ENCODE measurements at regions of chr15 and their contacts with region 1.

Region 1: DNA sequence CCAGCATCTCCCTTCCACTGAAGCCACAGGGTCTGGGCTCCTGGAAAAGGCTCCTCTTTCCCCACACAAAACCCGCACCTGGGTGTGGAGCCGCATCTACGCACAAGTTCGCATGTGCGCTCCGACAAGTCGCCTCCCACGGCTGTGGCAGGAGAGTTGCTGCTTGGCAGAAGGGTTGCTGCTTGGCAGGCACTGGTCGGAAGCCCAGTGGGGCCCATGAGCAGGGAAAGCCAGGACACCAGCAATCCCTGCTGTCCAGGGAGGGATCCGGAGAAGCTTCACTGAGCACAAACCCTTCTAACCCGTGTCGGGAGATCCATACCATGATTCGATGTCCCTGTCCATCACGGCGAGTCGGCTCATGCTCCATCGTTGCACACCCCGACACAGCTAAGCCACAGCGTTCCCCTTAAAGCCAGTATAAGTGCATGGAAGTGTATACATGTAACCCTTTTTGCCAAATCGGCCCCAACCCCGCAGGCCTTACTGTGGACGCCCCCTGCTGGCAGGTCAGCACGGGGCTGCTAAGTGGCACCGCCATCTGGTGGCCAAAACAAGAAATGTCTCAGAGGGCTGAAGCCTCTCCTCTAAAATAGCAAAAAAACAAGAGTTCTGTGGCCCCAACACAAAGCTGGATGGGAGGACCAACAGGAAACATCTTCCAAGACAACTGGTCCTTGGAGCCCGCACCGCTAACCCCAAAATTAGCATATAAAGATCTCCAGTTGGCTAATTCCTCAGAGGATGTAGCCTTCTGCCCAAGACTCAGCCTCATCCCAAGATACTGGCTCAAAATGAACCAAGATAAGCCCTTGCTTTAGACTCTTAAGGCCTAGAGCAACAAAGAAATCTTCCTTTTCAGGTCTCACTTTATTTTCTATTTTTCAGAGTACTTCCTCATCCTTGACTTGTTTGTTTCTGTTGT is 8.3 kb downstream of the ANKRD63 start:
- DNase-seq: peak; percentile 78 to 81
- ATAC-seq: peak; percentile 18 to 69 (median 50)
- H3K4me3 ChIP-seq: no peak overlapping the region
- H3K27ac ChIP-seq: no peak overlapping the region
- H3K4me1 ChIP-seq: peaks cover 0 to 32% (median 10%) of the 10 kb centered on the region in 9 donors
- H3K27me3 ChIP-seq: peaks cover 0 to 25% (median 20%) of the 10 kb centered on the region in 7 donors
- CTCF ChIP-seq: peak in 8 of 9 donors; percentile 99 to 100 (median 100)

Region 2: GRCh38 chr15:40044717-40045571 is 229.7 kb before region 1 on chr15:
- intact Hi-C with region 1: loop called (anchors 1 to 5 kb)
- DNase-seq: peak; percentile 87 to 89
- ATAC-seq: peak; percentile 91 to 96 (median 94)
- H3K4me3 ChIP-seq: peak overlapping the region in 5 of 10 donors; percentile 2 to 22 (median 19)
- H3K27ac ChIP-seq: peak overlapping the region in 8 of 10 donors; percentile 36 to 74 (median 46)
- H3K4me1 ChIP-seq: peaks cover 3 to 67% (median 59%) of the 10 kb centered on the region in 9 donors
- H3K27me3 ChIP-seq: no peaks in the 10 kb centered on the region
- CTCF ChIP-seq: peak; percentile 79 to 99 (median 95)

Region 3: GRCh38 chr15:40115670-40116093 is 158.9 kb before region 1 on chr15:
- intact Hi-C with region 1: loop called in 1 of 10 experiments (anchors 10 kb)
- DNase-seq: peak in 1 of 2 donors; percentile 48
- ATAC-seq: peak in 6 of 8 donors; percentile 52 to 78 (median 56)
- H3K4me3 ChIP-seq: no peak overlapping the region
- H3K27ac ChIP-seq: no peak overlapping the region
- H3K4me1 ChIP-seq: peaks cover 0 to 7% (median 0%) of the 10 kb centered on the region in 9 donors
- H3K27me3 ChIP-seq: peaks cover 0 to 8% (median 0%) of the 10 kb centered on the region in 7 donors
- CTCF ChIP-seq: no peak

Region 4: GRCh38 chr15:40217159-40217824 is 57.3 kb before region 1 on chr15:
- intact Hi-C with region 1: loop called (anchors 1 to 5 kb)
- DNase-seq: peak in 1 of 2 donors; percentile 67
- ATAC-seq: peak; percentile 80 to 92 (median 82)
- H3K4me3 ChIP-seq: no peak overlapping the region
- H3K27ac ChIP-seq: no peak overlapping the region
- H3K4me1 ChIP-seq: no peaks in the 10 kb centered on the region
- H3K27me3 ChIP-seq: no peaks in the 10 kb centered on the region
- CTCF ChIP-seq: peak; percentile 68 to 92 (median 87)

Region 5: DNA sequence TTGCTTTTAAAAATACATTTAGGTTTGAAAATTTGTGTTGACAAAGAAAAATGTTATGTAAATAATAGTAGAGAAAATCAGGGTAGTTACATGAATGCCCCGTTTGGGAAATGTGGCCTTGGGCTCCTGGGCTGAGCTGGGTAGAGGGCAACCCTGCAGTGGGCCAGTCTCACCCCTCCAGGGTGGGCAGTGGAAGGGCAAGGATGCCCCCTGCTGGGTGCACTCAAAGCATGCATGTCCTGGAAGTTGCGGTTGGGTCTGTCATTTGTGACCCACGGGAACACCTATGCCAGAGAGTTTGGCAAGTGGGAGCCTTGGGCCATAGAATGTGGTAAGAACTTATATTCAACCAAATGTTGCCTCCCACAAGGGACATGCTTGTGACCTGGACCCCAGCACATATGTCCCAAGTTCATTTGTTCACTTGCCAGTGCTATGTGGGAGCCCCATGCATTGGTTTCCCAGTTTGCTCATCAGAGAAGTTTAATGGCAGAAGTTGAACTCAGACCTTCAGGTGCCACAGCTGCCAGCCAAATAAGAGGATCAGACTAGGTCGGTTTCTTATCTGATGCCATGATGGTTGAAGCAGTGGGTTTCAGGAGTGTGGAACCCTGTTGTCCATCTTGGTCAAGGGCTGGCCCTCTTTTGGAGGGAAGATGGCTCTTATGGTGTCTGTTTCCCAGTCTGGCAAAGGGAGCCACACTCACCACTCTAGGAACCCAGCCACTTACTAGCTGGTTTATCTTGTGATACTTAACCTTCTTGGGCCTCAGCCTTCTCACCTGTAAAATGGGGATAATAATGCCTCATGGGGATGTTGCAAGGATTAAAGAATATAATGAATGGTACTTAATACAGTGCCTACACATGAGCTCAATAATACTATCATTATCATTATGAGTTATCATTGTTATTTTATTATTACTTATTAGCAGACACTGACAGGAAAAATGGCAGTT is 35.7 kb after region 1 on chr15:
- intact Hi-C with region 1: loop called in 5 of 10 experiments (anchors 1 to 5 kb)
- DNase-seq: peak; percentile 63 to 68
- ATAC-seq: peak; percentile 40 to 82 (median 74)
- H3K4me3 ChIP-seq: no peak overlapping the region
- H3K27ac ChIP-seq: no peak overlapping the region
- H3K4me1 ChIP-seq: peaks cover 0 to 45% (median 7%) of the 10 kb centered on the region in 9 donors
- H3K27me3 ChIP-seq: peaks cover 0 to 3% (median 0%) of the 10 kb centered on the region in 7 donors
- CTCF ChIP-seq: peak; percentile 47 to 86 (median 80)

Region 6: DNA sequence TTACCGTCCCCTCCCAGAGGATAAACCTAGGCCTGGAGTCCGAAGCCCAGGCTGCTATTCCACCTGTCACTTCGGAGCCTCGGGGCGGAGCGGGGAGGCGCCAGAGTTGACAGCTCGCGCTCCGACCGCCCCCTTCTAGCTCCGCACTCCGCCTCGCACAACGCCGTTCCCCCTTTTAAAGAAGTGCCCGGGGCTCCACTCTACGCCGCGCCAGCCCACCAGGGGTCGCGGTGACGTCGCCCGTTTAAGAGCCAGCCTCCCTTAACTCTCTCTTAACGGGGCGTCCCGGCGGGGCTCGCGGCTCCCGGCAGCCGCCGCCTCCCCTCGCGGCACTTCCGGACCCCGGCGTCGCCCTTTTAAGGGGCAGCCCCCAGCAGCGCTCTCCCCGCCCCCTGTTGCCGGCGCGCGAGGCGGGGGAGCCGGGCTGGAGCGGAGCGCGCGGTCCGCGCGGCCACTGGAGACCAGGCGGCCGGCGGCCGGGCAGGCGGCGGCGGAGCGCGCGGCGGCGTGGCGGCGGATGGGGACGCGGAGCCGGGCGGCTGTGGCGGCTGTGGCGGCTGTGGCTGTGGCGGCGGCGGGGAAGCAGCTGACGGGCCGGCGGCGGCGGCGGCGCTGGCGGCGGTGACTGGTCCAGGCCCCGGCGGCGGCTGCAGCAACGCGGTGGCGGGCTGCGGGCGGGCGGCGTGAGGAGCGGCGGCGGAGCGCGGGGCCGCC is 48.8 kb after region 1 on chr15 and contains the start of gene INAFM2:
- intact Hi-C with region 1: no loop called
- DNase-seq: peak; percentile 90 to 94
- ATAC-seq: peak; percentile 90 to 93 (median 92)
- H3K4me3 ChIP-seq: peak within 1 kb of the TSS; percentile 63 to 93 (median 82)
- H3K27ac ChIP-seq: peak within 1 kb of the TSS; percentile 78 to 94 (median 90)
- H3K4me1 ChIP-seq: peaks cover 7 to 54% (median 42%) of the 10 kb centered on the region in 9 donors
- H3K27me3 ChIP-seq: no peaks in the 10 kb centered on the region
- CTCF ChIP-seq: peak; percentile 68 to 86 (median 77)
- total RNA-seq, gene INAFM2: 32.5 to 63.9 (median 40.9) TPM